HAP-1 (cell line): ENCODE measurements at regions of chr14 and their contacts with region 1.

Region 1: GRCh38 chr14:100662879-100663760 is 63.6 kb upstream of the DLK1 start:
- DNase-seq: peak; percentile 56 to 83
- H3K4me3 ChIP-seq: no peak overlapping the region
- H3K4me1 ChIP-seq: no peaks in the 10 kb centered on the region
- H3K27me3 ChIP-seq: no peaks in the 10 kb centered on the region

Region 2: DNA sequence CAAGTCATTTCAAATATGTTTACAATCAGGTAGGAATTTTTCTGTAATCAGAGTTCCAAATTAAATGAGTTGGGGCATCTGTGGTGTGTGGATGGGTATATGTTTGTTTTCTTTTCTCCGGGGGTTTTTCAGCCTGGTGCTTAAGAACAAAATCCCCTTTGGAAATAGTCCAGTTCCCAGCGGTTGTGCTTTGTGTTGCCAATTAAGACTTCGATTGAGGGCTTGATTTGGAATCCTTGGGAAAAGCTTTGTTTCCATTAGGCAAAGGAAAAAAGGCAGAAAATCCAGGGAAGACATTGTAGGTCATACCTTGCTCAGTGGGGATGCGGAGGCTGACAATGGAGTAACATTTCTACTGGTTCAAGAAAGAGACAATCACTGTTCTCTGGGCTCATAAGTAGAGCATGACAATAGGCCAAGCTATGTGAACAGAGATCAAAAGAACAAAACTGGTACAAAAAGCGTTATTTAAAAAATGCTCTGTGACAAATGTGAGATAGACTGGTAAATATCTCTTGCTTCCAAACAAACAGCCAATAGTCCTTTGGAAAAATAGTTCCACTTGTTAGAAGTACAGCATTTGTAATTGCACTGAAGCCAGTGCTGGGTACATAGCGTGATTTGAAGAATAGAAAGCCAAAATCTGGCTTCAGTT is 790.2 kb before region 1 on chr14:
- in situ Hi-C with region 1: no loop called
- DNase-seq: peak; percentile 65 to 86
- H3K4me3 ChIP-seq: no peak overlapping the region
- H3K4me1 ChIP-seq: peaks cover 26% of the 10 kb centered on the region
- H3K27me3 ChIP-seq: no peaks in the 10 kb centered on the region

Region 3: DNA sequence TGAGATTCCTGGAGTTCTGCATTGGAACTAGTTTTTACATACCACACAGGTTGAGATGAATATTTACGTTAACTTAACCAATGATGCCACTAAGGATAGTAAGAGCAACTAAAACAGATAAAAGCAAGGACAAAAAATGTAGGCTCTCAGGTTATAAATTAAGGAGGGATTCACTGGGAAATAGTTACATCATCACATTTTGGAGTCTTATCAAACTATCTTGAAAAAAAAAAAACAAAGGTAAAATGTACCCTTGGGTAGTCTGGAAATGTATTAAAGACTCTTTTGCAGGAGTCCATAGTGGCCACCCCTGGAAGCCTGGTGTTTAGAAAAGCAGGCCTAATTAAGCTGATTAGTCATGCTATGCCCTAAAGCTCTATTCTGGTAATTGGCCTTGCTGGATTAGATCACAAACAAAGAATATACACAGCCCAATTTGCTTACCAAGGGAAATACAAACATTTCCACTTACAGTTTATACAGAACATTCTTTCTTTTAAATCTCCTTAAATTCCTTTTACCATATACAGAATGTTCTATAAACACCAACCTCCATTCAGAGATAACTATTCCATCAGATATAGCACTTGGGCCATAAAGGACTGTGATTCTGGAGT is 300.7 kb before region 1 on chr14:
- in situ Hi-C with region 1: no loop called
- DNase-seq: no peak
- H3K4me3 ChIP-seq: no peak overlapping the region
- H3K4me1 ChIP-seq: peaks cover 3% of the 10 kb centered on the region; the same call in 1 of the 2 replicates
- H3K27me3 ChIP-seq: no peaks in the 10 kb centered on the region

Region 4: GRCh38 chr14:100900837-100901390 is 237.8 kb after region 1 on chr14:
- in situ Hi-C with region 1: loop called (anchors 5 kb)
- DNase-seq: peak; percentile 52 to 90
- H3K4me3 ChIP-seq: no peak overlapping the region
- H3K4me1 ChIP-seq: peaks cover 31% of the 10 kb centered on the region
- H3K27me3 ChIP-seq: peaks cover 10% of the 10 kb centered on the region

Region 5: GRCh38 chr14:101235335-101236103 is 572.4 kb after region 1 on chr14:
- in situ Hi-C with region 1: loop called (anchors 10 kb)
- DNase-seq: peak; percentile 41 to 87
- H3K4me3 ChIP-seq: no peak overlapping the region
- H3K4me1 ChIP-seq: no peaks in the 10 kb centered on the region
- H3K27me3 ChIP-seq: no peaks in the 10 kb centered on the region

Region 6: GRCh38 chr14:101288436-101289229 is 625.5 kb after region 1 on chr14:
- in situ Hi-C with region 1: no loop called
- DNase-seq: no peak
- H3K4me3 ChIP-seq: no peak overlapping the region
- H3K4me1 ChIP-seq: peaks cover 6% of the 10 kb centered on the region
- H3K27me3 ChIP-seq: no peaks in the 10 kb centered on the region

Region 7: GRCh38 chr14:101628471-101628966 is 965.4 kb after region 1 on chr14:
- in situ Hi-C with region 1: loop called (anchors 25 kb)
- DNase-seq: peak; percentile 57 to 85
- H3K4me3 ChIP-seq: no peak overlapping the region
- H3K4me1 ChIP-seq: peaks cover 3% of the 10 kb centered on the region; the same call in 1 of the 2 replicates
- H3K27me3 ChIP-seq: no peaks in the 10 kb centered on the region